Activated CD4-positive, alpha-beta T cell treated with anti-CD3 and anti-CD28 coated beads, Interleukin-2, amount 10 ng/mL, durations not matched to agents 24 days and 14 days (primary cell): ENCODE measurements at regions of chr5 and their contacts with region 1.

Region 1: GRCh38 chr5:40223884-40224402 is 455.8 kb upstream of the PTGER4 start:
- DNase-seq: peak; percentile 82
- H3K4me3 Mint-ChIP-seq: peak overlapping the region; percentile 58
- H3K27ac Mint-ChIP-seq: peak overlapping the region; percentile 90
- H3K4me1 Mint-ChIP-seq: peaks cover 43% of the 10 kb centered on the region
- H3K27me3 Mint-ChIP-seq: no peaks in the 10 kb centered on the region

Region 2: DNA sequence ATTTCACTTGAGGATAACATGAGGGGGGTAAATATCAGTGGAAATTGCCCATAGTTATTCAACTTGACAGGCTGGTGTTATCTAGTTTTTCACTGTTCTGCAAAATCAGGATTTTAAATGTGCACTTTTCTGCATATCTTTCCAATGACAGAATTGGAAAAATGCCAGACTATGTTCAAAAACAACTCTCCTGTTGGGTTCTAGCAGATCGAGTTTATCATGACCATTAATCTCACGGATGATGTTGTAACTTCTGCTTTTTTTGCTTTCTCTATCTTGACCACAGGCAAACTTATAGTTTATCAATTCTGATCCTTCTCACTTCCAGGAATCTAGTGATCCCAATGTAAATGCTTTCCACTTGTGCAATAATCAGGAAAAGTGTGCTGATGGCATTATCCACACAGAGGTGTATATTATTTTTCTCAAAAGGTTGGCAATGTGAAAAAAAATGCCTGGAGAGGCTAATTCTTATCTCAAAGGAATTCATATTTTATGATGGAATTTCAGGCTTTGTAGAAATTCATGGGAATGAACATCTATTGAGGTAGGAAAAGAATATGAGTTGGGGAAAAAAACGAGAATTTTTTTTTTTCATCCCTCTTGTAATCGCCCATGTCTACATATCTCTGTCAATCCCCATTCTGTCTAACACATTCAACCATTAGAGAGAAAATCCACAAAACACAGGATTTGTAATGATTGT is 725.5 kb before region 1 on chr5:
- intact Hi-C with region 1: no loop called
- DNase-seq: no peak
- H3K4me3 Mint-ChIP-seq: no peak overlapping the region
- H3K27ac Mint-ChIP-seq: no peak overlapping the region
- H3K4me1 Mint-ChIP-seq: no peaks in the 10 kb centered on the region
- H3K27me3 Mint-ChIP-seq: peaks cover 4% of the 10 kb centered on the region

Region 3: DNA sequence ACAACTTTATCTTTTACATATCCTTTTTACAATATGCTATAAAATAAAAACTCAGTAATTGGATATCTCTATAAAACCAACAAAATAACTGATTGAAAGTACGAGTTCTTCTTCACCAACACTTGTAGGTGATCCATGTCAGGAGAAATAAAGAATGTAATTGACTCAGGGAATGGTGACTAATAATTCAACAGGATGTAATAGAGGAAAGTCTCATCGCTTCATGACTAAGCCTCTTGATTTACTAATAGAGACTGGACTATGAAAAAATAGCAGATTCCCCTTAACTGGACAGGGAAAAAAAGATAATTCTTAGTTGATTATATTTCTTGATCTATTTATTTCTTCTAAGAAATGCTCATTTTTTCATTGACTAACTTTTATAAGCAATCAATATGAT is 52.0 kb before region 1 on chr5:
- intact Hi-C with region 1: loop called (anchors 5 kb)
- DNase-seq: no peak
- H3K4me3 Mint-ChIP-seq: no peak overlapping the region
- H3K27ac Mint-ChIP-seq: no peak overlapping the region
- H3K4me1 Mint-ChIP-seq: no peaks in the 10 kb centered on the region
- H3K27me3 Mint-ChIP-seq: no peaks in the 10 kb centered on the region

Region 4: GRCh38 chr5:40333459-40334244 is 109.7 kb after region 1 on chr5:
- intact Hi-C with region 1: loop called (anchors 1 kb)
- DNase-seq: peak; percentile 59
- H3K4me3 Mint-ChIP-seq: no peak overlapping the region
- H3K27ac Mint-ChIP-seq: no peak overlapping the region
- H3K4me1 Mint-ChIP-seq: peaks cover 19% of the 10 kb centered on the region
- H3K27me3 Mint-ChIP-seq: no peaks in the 10 kb centered on the region

Region 5: DNA sequence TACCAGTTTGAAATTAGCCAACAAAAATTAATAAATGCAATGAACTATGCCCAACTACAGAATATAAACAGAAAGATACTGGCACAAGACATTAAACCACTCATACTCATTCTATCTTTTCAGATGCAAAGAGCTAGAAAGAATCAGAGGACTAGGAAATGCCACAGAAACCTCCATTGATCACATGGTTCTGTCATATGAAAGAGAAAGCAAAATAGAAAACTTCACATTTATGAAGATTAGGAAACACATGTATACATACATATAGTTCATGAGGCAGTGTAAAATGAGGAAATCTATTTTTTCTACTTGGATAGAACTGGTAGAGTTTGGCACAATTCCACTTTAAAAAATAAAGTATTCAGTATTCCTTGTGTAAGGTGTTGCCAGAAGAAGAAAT is 180.7 kb after region 1 on chr5:
- intact Hi-C with region 1: loop called (anchors 1 kb)
- DNase-seq: peak; percentile 80
- H3K4me3 Mint-ChIP-seq: peak overlapping the region; percentile 21
- H3K27ac Mint-ChIP-seq: peak overlapping the region; percentile 75
- H3K4me1 Mint-ChIP-seq: peaks cover 71% of the 10 kb centered on the region
- H3K27me3 Mint-ChIP-seq: no peaks in the 10 kb centered on the region

Region 6: GRCh38 chr5:40416098-40416497 is 192.2 kb after region 1 on chr5:
- intact Hi-C with region 1: no loop called
- DNase-seq: no peak
- H3K4me3 Mint-ChIP-seq: no peak overlapping the region
- H3K27ac Mint-ChIP-seq: no peak overlapping the region
- H3K4me1 Mint-ChIP-seq: peaks cover 6% of the 10 kb centered on the region
- H3K27me3 Mint-ChIP-seq: no peaks in the 10 kb centered on the region

Region 7: DNA sequence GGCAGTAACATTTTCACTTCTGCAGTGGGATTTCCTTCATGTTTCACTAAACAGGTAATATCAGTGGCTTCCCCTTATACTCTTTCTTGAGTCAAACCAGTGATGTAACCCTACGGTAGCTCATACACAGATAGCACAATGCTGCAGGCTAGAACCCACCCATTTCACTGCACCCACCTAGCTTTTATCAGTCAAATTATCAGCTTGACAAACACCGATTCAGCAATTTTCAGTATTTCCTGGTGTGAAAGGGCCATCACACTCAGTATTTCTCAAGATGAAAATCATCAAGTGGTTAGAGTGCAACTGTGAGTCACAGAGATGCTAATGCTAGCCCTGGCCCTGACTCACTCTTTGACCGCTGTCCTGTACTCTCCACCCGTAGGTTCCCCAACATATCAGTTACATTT is 213.5 kb after region 1 on chr5:
- intact Hi-C with region 1: loop called (anchors 5 kb)
- DNase-seq: peak; percentile 66
- H3K4me3 Mint-ChIP-seq: peak overlapping the region; percentile 16
- H3K27ac Mint-ChIP-seq: peak overlapping the region; percentile 79
- H3K4me1 Mint-ChIP-seq: peaks cover 69% of the 10 kb centered on the region
- H3K27me3 Mint-ChIP-seq: no peaks in the 10 kb centered on the region

Region 8: DNA sequence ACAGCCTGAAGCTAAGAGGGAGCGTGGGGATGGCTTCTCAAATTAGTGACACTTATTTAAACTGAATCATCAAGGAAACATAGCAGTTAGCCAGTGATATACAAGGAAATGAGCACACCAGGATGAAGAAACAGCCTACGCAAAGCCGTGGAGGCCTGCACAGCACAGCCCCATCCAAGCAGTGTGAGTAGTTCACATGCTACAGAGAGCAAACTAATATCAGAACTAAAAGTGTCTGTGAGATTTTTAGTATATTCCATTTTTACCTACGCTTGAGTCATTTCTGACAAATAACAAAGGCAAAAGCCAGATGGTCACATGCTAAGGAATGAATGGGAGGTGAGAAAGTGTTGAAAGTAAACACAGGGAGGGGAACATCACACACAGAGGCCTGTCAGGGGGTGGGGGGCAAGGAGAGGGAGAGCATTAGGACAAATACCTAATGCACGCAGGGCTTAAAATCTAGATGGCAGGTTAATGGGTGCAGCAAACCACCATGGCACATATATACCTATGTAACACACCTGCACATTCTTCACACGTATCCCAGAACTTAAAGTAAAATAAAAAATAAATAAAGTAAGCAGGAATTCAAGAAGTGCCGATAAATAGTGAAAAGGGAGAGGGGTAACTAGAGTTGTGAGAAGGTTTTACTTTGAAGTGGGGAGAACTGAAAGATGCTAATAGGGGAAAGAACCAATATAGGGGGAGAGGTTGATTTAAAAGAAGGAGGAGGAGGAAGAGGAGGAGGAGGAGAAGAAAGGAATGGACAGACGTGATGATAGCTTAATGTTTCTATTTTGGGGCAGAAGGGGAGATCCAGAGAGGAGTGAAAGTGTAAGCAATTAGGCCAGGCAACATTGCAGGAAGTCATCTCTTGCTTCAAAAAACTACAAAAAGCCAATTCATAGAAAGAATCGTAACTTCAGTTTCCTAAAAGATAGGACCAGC is 354.8 kb after region 1 on chr5:
- intact Hi-C with region 1: loop called (anchors 1 kb)
- DNase-seq: peak; percentile 76
- H3K4me3 Mint-ChIP-seq: peak overlapping the region; percentile 45
- H3K27ac Mint-ChIP-seq: peak overlapping the region; percentile 93
- H3K4me1 Mint-ChIP-seq: peaks cover 27% of the 10 kb centered on the region
- H3K27me3 Mint-ChIP-seq: no peaks in the 10 kb centered on the region

Region 9: DNA sequence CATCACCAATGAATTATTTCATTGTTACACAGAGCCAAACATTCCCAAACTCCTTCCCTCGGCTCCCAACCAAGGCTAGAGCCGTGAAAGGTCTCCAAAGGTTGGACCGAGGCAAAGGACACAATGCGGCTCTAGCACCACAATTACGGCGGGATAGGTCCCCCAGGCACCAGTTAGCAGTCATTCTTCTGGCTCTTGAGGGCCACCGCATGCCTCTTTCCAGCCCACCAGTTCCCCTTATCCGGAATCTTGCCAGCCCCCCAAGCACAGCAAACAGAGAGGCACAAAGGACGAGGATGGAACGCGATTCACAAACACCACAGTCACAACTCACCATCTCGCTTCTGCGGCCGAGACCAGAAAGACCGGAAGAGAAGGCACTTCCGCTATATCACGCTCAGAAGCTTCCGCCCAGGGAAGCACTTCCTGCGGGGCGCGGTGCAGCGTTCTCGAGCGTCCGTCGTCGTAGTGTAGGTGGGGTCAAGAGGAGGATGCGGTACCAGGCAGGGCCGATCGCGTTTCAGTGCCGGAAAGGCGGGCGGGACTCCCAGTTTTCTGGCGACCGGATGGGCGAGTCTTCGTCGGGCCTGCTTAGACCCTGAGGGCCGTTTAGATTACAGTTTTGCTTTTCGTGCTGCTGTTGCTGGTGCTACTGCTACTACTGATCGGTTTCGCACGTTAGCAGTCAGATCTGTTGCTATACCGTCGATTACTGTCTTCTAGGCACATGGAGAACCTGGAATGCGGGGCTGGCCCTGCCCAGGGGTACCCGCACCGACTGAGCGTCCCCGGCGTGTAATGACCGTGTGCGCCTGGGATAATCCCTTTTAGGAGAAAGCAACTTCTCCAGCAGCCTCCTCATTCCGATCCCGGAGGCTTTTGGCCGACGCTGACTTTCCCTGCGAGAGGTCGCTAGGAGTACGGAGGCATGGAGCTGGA is 611.2 kb after region 1 on chr5 and contains the start of gene RPL37:
- intact Hi-C with region 1: loop called (anchors 2 kb)
- DNase-seq: peak; percentile 97
- H3K4me3 Mint-ChIP-seq: peak within 1 kb of the TSS; percentile 97
- H3K27ac Mint-ChIP-seq: peak within 1 kb of the TSS; percentile 99
- H3K4me1 Mint-ChIP-seq: peaks cover 43% of the 10 kb centered on the region
- H3K27me3 Mint-ChIP-seq: no peaks in the 10 kb centered on the region
- total RNA-seq, gene RPL37: 1,546 and 1,565 TPM in 2 replicates